ENCODE measurements at regions of chr3 and their contacts with region 1.

Region 1: GRCh38 chr3:31531992-31532586 is 636 bp upstream of the STT3B start:
- DNase-seq: peak; percentile 99
- H3K4me3 ChIP-seq: peak overlapping the region; percentile 88 to 89
- H3K27ac ChIP-seq: peak overlapping the region; percentile 91 to 96
- H3K4me1 ChIP-seq: peaks cover 9% of the 10 kb centered on the region
- H3K27me3 ChIP-seq: no peaks in the 10 kb centered on the region
- CTCF ChIP-seq: peak; percentile 7 to 60 (median 26)
- POLR2A ChIP-seq: no peak

Region 2: GRCh38 chr3:31562525-31562924 is 30.4 kb after region 1 on chr3:
- intact Hi-C with region 1: no loop called
- DNase-seq: no peak
- H3K4me3 ChIP-seq: no peak overlapping the region
- H3K27ac ChIP-seq: no peak overlapping the region
- H3K4me1 ChIP-seq: no peaks in the 10 kb centered on the region
- H3K27me3 ChIP-seq: no peaks in the 10 kb centered on the region
- CTCF ChIP-seq: no peak
- POLR2A ChIP-seq: no peak

Region 3: GRCh38 chr3:31968927-31969418 is 436.9 kb after region 1 on chr3:
- intact Hi-C with region 1: loop called (anchors 10 kb)
- DNase-seq: peak; percentile 45
- H3K4me3 ChIP-seq: no peak overlapping the region
- H3K27ac ChIP-seq: peak overlapping the region; percentile 5 to 6
- H3K4me1 ChIP-seq: no peaks in the 10 kb centered on the region
- H3K27me3 ChIP-seq: no peaks in the 10 kb centered on the region
- CTCF ChIP-seq: no peak
- POLR2A ChIP-seq: no peak